ENCODE measurements at regions of chr11 and their contacts with region 1.

Region 1: DNA sequence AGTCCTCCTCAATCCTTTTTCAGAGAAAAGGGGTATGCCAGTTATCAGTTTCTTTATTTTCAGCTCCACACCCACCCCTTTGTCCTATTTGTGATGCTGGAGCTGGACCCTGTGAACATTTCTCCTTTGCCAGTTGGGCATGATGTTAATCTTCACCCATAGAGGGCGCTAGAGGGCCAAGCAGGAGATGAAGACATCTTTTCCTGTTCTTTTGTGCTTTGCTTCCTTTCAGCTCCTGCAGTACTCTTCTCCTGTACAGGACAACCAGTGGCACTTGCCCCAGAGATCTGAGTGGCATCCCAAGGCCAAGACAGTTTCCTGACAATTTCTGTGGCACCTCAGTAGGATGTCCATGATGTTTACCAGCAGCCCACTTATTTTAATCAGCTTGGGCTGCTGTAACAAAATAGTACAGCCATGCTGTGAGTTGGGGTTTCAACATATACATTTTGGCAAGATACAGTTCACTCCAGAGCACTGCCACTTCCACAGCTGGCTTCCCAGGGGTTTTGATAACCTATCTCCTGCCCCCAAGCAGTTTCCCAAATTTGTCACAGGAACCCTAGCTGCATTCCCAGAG is 4.6 kb downstream of the SAA2 start:
- DNase-seq: peak; percentile 54
- ATAC-seq: peak; percentile 38
- H3K4me3 ChIP-seq: no peak overlapping the region
- H3K27ac ChIP-seq: peak overlapping the region; percentile 12; the same call in 1 of the 2 replicates
- H3K4me1 ChIP-seq: peaks cover 20% of the 10 kb centered on the region
- H3K27me3 ChIP-seq: no peaks in the 10 kb centered on the region
- CTCF ChIP-seq: peak; percentile 85 to 94 (median 89)
- EP300 ChIP-seq: no peak
- POLR2A ChIP-seq: no peak
- RAD21 ChIP-seq: peak; percentile 93

Region 2: DNA sequence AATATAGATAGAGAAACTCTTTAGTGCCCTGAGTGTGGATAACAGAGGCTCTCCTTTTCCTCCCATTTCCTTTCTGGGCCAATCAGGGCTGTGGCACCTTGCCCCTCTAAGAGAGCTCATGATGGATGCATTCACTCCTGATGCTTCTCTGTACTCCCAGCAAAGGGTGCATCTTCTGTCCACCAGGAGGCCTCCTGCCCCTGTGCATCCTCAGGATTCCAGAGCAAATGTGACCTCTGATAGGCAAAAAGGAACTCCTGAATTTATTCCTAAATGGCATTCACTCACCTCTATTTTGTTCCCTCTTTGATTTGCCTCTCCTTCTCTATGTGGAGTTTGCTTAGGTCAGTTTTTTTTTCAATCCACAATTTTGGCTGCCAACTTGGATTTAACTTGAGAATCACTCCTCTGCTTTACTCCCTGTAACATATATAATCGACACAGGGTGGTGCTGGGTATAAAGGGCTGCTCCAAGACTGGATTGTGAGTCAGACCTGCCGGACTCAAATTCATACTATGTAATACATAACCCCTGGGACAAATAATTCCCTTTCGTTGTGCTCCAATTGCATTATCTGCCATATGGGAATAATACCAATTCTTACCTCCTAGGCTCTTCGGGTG is 72.4 kb before region 1 on chr11:
- CTCF ChIA-PET with region 1: no interaction called
- POLR2A ChIA-PET with region 1: no interaction called
- RAD21 ChIA-PET with region 1: no interaction called
- SMC1A ChIA-PET with region 1: no interaction called
- in situ Hi-C with region 1: no loop called
- intact Hi-C with region 1: no loop called
- DNase-seq: no peak
- ATAC-seq: peak; percentile 79
- H3K4me3 ChIP-seq: no peak overlapping the region
- H3K27ac ChIP-seq: no peak overlapping the region
- H3K4me1 ChIP-seq: no peaks in the 10 kb centered on the region
- H3K27me3 ChIP-seq: no peaks in the 10 kb centered on the region; a peak in 1 of 4 replicates
- CTCF ChIP-seq: peak; percentile 59 to 76 (median 61)
- EP300 ChIP-seq: no peak
- POLR2A ChIP-seq: no peak
- RAD21 ChIP-seq: peak; percentile 71

Region 3: DNA sequence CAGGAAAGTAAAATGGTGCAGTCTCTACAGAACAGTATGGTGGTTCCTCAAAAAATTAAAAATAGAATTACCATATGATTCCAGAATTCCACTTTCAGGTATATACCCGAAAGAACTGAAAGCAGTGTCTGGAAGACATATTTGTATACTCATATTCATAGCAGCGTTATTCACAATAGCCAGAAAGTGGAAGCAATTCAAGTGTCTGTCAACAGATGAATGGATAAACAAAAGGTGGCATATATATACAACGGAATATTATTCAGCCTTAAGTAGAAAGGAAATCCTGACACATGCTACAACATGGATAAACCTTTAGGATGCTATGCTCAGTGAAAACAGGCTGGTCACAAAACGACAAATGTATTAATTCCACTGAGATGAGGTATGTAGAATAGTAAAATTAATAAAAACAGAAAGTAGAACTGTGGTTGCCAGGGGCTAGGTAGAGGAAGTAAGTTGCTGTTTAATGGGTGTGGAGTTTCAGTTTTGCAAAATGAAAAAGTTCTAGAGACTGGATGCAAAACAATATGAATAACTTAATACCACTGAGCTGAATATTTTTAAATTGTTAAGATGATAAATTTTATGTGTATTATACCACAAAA is 36.7 kb after region 1 on chr11:
- CTCF ChIA-PET with region 1: interaction called, 15 read pairs
- POLR2A ChIA-PET with region 1: no interaction called
- RAD21 ChIA-PET with region 1: interaction called, 9 read pairs
- SMC1A ChIA-PET with region 1: interaction called, 17 read pairs
- in situ Hi-C with region 1: no loop called
- intact Hi-C with region 1: loop called (anchors 1 kb)
- DNase-seq: peak; percentile 20
- ATAC-seq: peak; percentile 97
- H3K4me3 ChIP-seq: peak overlapping the region; percentile 12; the same call in 1 of the 2 replicates
- H3K27ac ChIP-seq: peak overlapping the region; percentile 19; the same call in 1 of the 2 replicates
- H3K4me1 ChIP-seq: peaks cover 11% of the 10 kb centered on the region
- H3K27me3 ChIP-seq: no peaks in the 10 kb centered on the region
- CTCF ChIP-seq: no peak
- EP300 ChIP-seq: 0 out of 4 replicates have a peak, but pooled peaks of 1 of the 2 experiments have one; percentile 19
- POLR2A ChIP-seq: no peak
- RAD21 ChIP-seq: no peak

Region 4: DNA sequence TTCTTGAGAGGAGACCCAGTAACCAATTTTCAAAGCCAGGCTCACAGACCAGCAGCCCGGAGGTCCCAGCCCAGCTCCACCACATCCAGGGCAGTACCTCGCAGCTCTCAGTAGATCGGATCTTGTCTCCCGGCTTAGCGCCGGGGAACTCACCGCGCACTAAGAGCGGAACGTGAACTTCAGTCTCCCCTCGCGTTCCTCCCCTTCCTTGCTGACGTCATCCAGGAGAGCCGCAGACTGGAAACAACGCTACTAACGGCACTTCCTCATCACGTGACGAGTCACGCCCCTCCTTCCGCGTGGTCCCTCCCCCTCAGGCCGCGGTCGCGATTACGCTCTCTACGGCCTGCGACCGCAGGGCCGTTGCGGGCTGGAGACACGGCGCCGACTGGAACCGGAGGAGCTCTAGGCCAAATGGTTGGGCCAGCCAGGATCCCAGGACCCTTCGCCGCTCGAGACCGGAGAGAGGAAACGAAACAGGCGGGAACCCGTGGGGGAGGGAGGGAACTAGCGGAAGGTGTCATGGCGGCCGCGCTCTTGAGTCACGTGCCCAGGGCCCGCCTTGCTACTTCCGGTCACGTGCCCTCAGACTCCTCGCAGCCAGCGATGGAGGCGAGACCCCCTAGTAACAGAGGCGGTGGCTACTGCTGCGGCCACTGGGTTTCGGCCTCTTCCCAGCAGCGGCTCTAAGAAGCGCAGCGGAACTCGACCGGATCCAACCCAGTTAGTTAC is 78.3 kb after region 1 on chr11 and contains the starts of genes GTF2H1 and HPS5:
- CTCF ChIA-PET with region 1: interaction called, 44 read pairs
- POLR2A ChIA-PET with region 1: interaction called, 5 read pairs
- RAD21 ChIA-PET with region 1: interaction called, 27 read pairs
- SMC1A ChIA-PET with region 1: interaction called, 48 read pairs
- in situ Hi-C with region 1: no loop called
- intact Hi-C with region 1: loop called (anchors 2 kb)
- DNase-seq: peak; percentile 96
- ATAC-seq: peak; percentile 84
- H3K4me3 ChIP-seq: peak within 1 kb of the TSS; percentile 95
- H3K27ac ChIP-seq: peak within 1 kb of the TSS; percentile 100
- H3K4me1 ChIP-seq: 0 out of 2 replicates have a peak, but pooled peaks cover 2% of the 10 kb centered on the region
- H3K27me3 ChIP-seq: no peaks in the 10 kb centered on the region
- CTCF ChIP-seq: no peak
- EP300 ChIP-seq: no peak; a peak in 3 of 4 replicates
- POLR2A ChIP-seq: peak; percentile 90
- RAD21 ChIP-seq: no peak
- polyA plus RNA-seq, gene GTF2H1: 39.2 to 42.9 TPM
- polyA plus RNA-seq, gene HPS5: 11.9 to 19.9 TPM

Region 5: DNA sequence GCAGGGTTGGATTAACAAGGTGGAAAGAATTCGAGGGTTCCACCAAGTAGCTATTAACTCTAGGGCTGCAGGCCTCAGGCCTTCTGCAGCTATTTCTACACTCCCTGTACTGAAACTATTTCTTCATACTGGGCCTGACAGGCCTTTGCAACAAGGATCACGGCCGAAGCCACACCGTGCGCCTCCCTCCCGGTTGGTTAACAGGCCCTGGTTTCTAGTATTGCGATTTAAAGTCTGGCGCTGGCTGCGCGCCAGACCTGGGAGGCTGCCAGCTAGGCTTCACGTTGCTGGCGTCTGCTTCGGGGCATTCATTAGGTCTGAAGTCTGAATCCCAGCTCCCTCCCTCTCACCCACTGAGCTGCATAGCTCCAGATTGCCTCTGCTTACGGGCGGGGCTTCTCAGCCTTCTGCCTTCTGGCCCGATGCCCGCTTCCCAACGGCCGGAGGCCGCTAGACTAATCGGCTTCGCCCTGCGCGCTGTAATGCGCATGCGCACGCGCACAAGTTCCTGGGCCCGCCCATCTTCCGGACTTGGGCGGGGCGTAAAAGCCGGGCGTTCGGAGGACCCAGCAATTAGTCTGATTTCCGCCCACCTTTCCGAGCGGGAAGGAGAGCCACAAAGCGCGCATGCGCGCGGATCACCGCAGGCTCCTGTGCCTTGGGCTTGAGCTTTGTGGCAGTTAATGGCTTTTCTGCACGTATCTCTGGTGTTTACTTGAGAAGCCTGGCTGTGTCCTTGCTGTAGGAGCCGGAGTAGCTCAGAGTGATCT is 152.0 kb after region 1 on chr11:
- CTCF ChIA-PET with region 1: interaction called, 31 read pairs
- POLR2A ChIA-PET with region 1: interaction called, 4 read pairs
- RAD21 ChIA-PET with region 1: interaction called, 39 read pairs
- SMC1A ChIA-PET with region 1: interaction called, 42 read pairs
- in situ Hi-C with region 1: loop called (anchors 5 kb)
- intact Hi-C with region 1: loop called (anchors 1 kb)
- DNase-seq: peak; percentile 86
- ATAC-seq: peak; percentile 85
- H3K4me3 ChIP-seq: peak overlapping the region; percentile 97
- H3K27ac ChIP-seq: peak overlapping the region; percentile 95
- H3K4me1 ChIP-seq: peaks cover 15% of the 10 kb centered on the region
- H3K27me3 ChIP-seq: no peaks in the 10 kb centered on the region
- CTCF ChIP-seq: no peak
- EP300 ChIP-seq: no peak
- POLR2A ChIP-seq: peak; percentile 83
- RAD21 ChIP-seq: no peak

Region 6: DNA sequence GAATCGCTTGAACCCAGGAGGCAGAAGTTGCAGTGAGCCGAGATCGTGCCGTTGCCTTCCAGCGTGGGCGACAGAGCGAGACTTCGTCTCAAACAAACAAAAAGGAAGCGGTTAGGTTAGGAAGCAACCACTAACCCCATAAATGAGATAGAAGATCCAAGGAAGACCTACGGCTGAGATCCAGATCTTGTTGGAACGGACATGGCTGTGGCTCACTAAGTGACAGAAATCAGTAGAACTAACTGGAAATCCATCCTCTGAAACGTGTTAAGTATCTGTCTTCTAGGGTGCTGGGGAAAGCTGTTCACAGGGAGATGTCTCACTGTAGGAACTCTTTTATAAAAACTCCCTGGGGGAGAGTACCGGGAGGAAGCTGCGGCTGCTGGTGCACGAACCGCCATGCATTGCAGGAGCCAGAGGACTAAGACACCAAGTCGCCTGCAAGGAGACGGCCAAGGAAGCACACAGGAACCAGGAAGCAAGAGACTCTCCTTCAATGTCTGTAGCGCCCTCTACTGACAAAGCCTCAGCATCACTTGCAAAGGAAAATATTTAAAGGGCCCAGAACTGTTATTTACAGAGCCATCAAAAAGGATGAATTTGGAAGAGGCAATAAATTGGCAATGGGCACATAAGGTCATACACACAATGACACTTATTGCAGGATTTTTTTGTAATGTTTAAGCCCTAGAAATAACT is 407.1 kb after region 1 on chr11:
- CTCF ChIA-PET with region 1: interaction called, 17 read pairs
- POLR2A ChIA-PET with region 1: no interaction called
- RAD21 ChIA-PET with region 1: interaction called, 3 read pairs
- SMC1A ChIA-PET with region 1: interaction called, 8 read pairs
- in situ Hi-C with region 1: no loop called
- intact Hi-C with region 1: loop called (anchors 10 kb)
- DNase-seq: peak; percentile 20
- ATAC-seq: peak; percentile 94
- H3K4me3 ChIP-seq: no peak overlapping the region; the same call in 1 of the 2 replicates
- H3K27ac ChIP-seq: no peak overlapping the region
- H3K4me1 ChIP-seq: no peaks in the 10 kb centered on the region
- H3K27me3 ChIP-seq: no peaks in the 10 kb centered on the region
- CTCF ChIP-seq: peak; percentile 73 to 86 (median 75)
- EP300 ChIP-seq: no peak
- POLR2A ChIP-seq: peak; percentile 57; the same call in 1 of the 2 replicates
- RAD21 ChIP-seq: peak; percentile 87

Region 7: DNA sequence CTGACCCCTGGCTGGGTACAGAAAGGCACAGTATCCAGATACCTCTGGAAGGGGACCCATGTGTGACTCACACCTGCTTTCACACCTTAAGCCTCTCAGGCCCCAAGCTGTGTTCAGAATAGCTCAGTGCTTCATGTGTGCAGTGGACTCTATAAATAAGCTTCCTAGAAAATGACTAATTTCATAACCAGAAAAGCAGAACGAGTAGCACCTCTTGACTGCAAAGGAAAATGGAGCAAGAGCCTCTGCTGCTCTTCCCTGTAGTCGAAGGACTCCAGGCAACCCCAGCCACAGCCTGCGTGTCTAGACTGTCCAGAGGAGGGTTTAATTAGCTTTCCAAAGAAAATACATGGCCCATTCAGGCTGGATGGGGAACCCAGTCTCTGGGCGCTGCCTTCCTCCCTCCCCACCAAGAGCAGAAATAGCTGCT is 524.6 kb after region 1 on chr11:
- CTCF ChIA-PET with region 1: interaction called, 19 read pairs
- POLR2A ChIA-PET with region 1: no interaction called
- RAD21 ChIA-PET with region 1: interaction called, 11 read pairs
- SMC1A ChIA-PET with region 1: interaction called, 12 read pairs
- in situ Hi-C with region 1: no loop called
- intact Hi-C with region 1: no loop called
- DNase-seq: peak; percentile 77
- ATAC-seq: peak; percentile 80
- H3K4me3 ChIP-seq: no peak overlapping the region
- H3K27ac ChIP-seq: peak overlapping the region; percentile 35
- H3K4me1 ChIP-seq: peaks cover 38% of the 10 kb centered on the region
- H3K27me3 ChIP-seq: no peaks in the 10 kb centered on the region
- CTCF ChIP-seq: no peak
- EP300 ChIP-seq: peak; percentile 92 to 94
- POLR2A ChIP-seq: no peak
- RAD21 ChIP-seq: no peak

Measured in GM12878 (cell line).